CD4-positive, alpha-beta memory T cell (primary cell): ENCODE measurements at regions of chr2 and their contacts with region 1.

Region 1: GRCh38 chr2:24382363-24383073 is 22.2 kb upstream of the ITSN2 start:
- DNase-seq: peak in 4 of 5 donors; percentile 60 to 68 (median 64)
- H3K4me3 ChIP-seq: no peak overlapping the region
- H3K4me3 Mint-ChIP-seq: no peak overlapping the region
- H3K27ac ChIP-seq: no peak overlapping the region
- H3K27ac Mint-ChIP-seq: no peak overlapping the region
- H3K4me1 ChIP-seq: no peaks in the 10 kb centered on the region
- H3K4me1 Mint-ChIP-seq: peaks cover 0 to 2% (median 0%) of the 10 kb centered on the region in 4 donors
- H3K27me3 ChIP-seq: no peaks in the 10 kb centered on the region
- H3K27me3 Mint-ChIP-seq: peaks cover 0 to 2% of the 10 kb centered on the region in 2 donors

Region 2: GRCh38 chr2:24228470-24228869 is 154.0 kb before region 1 on chr2:
- CTCF ChIA-PET with region 1: interaction called, 3 read pairs
- POLR2A ChIA-PET with region 1: no interaction called
- intact Hi-C with region 1: loop called (anchors 1 kb)
- DNase-seq: no peak
- H3K4me3 ChIP-seq: no peak overlapping the region
- H3K4me3 Mint-ChIP-seq: no peak overlapping the region
- H3K27ac ChIP-seq: no peak overlapping the region
- H3K27ac Mint-ChIP-seq: peak overlapping the region in 2 of 7 donors; percentile 5 to 65
- H3K4me1 ChIP-seq: no peaks in the 10 kb centered on the region
- H3K4me1 Mint-ChIP-seq: peaks cover 0 to 5% (median 0%) of the 10 kb centered on the region in 4 donors
- H3K27me3 ChIP-seq: no peaks in the 10 kb centered on the region
- H3K27me3 Mint-ChIP-seq: no peaks in the 10 kb centered on the region

Region 3: GRCh38 chr2:24237313-24237712 is 145.2 kb before region 1 on chr2:
- CTCF ChIA-PET with region 1: no interaction called
- POLR2A ChIA-PET with region 1: no interaction called
- intact Hi-C with region 1: loop called (anchors 2 kb)
- DNase-seq: no peak
- H3K4me3 ChIP-seq: no peak overlapping the region
- H3K4me3 Mint-ChIP-seq: no peak overlapping the region
- H3K27ac ChIP-seq: no peak overlapping the region
- H3K27ac Mint-ChIP-seq: peak overlapping the region in 4 of 7 donors; percentile 2 to 74 (median 44)
- H3K4me1 ChIP-seq: no peaks in the 10 kb centered on the region
- H3K4me1 Mint-ChIP-seq: peaks cover 0 to 8% (median 3%) of the 10 kb centered on the region in 4 donors
- H3K27me3 ChIP-seq: no peaks in the 10 kb centered on the region
- H3K27me3 Mint-ChIP-seq: no peaks in the 10 kb centered on the region

Region 4: DNA sequence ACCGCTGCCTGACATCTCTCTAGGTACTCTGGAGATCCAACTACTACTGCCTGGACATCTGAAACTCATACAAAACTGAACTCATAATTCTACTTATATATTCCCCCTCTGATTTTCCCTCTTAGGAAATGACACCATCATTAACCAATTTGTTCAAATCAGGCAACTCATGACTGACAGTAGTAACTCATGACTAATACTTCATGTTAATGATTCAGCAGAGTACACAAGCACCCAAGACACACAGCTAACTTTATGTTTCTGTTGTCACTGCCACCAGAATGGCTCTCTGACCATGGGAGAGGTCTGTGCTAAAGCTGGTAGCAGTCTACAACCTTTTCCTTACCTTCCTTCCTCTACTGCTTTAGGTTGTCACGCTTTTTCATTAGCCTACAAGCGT is 113.3 kb before region 1 on chr2:
- CTCF ChIA-PET with region 1: interaction called, 3 read pairs
- POLR2A ChIA-PET with region 1: no interaction called
- intact Hi-C with region 1: loop called (anchors 5 kb)
- DNase-seq: no peak
- H3K4me3 ChIP-seq: no peak overlapping the region
- H3K4me3 Mint-ChIP-seq: no peak overlapping the region
- H3K27ac ChIP-seq: no peak overlapping the region
- H3K27ac Mint-ChIP-seq: peak overlapping the region in 4 of 7 donors; percentile 5 to 62 (median 22)
- H3K4me1 ChIP-seq: no peaks in the 10 kb centered on the region
- H3K4me1 Mint-ChIP-seq: peaks cover 0 to 7% (median 3%) of the 10 kb centered on the region in 4 donors
- H3K27me3 ChIP-seq: no peaks in the 10 kb centered on the region
- H3K27me3 Mint-ChIP-seq: no peaks in the 10 kb centered on the region

Region 5: GRCh38 chr2:24304098-24304497 is 78.4 kb before region 1 on chr2:
- CTCF ChIA-PET with region 1: interaction called, 3 read pairs
- POLR2A ChIA-PET with region 1: no interaction called
- intact Hi-C with region 1: loop called (anchors 5 kb)
- DNase-seq: no peak
- H3K4me3 ChIP-seq: no peak overlapping the region
- H3K4me3 Mint-ChIP-seq: no peak overlapping the region
- H3K27ac ChIP-seq: no peak overlapping the region
- H3K27ac Mint-ChIP-seq: no peak overlapping the region
- H3K4me1 ChIP-seq: no peaks in the 10 kb centered on the region
- H3K4me1 Mint-ChIP-seq: peaks cover 0 to 2% (median 0%) of the 10 kb centered on the region in 4 donors
- H3K27me3 ChIP-seq: no peaks in the 10 kb centered on the region
- H3K27me3 Mint-ChIP-seq: no peaks in the 10 kb centered on the region

Region 6: GRCh38 chr2:24850944-24851343 is 468.4 kb after region 1 on chr2:
- CTCF ChIA-PET with region 1: no interaction called
- POLR2A ChIA-PET with region 1: no interaction called
- intact Hi-C with region 1: no loop called
- DNase-seq: no peak
- H3K4me3 ChIP-seq: no peak overlapping the region
- H3K4me3 Mint-ChIP-seq: no peak overlapping the region
- H3K27ac ChIP-seq: no peak overlapping the region
- H3K27ac Mint-ChIP-seq: no peak overlapping the region
- H3K4me1 ChIP-seq: no peaks in the 10 kb centered on the region
- H3K4me1 Mint-ChIP-seq: peaks cover 0 to 1% (median 0%) of the 10 kb centered on the region in 4 donors
- H3K27me3 ChIP-seq: no peaks in the 10 kb centered on the region
- H3K27me3 Mint-ChIP-seq: no peaks in the 10 kb centered on the region